ENCODE measurements at regions of chr9 and their contacts with region 1.

Region 1: GRCh38 chr9:131334629-131335367 is 45.3 kb downstream of the PLPP7 start:
- DNase-seq: peak; percentile 20
- H3K4me3 ChIP-seq: no peak overlapping the region
- H3K27ac ChIP-seq: no peak overlapping the region
- H3K4me1 ChIP-seq: no peaks in the 10 kb centered on the region
- H3K27me3 ChIP-seq: no peaks in the 10 kb centered on the region
- CTCF ChIP-seq: no peak

Region 2: GRCh38 chr9:131178382-131178781 is 156.4 kb before region 1 on chr9:
- intact Hi-C with region 1: loop called (anchors 1 kb)
- DNase-seq: peak; percentile 65
- H3K4me3 ChIP-seq: no peak overlapping the region
- H3K27ac ChIP-seq: no peak overlapping the region
- H3K4me1 ChIP-seq: no peaks in the 10 kb centered on the region
- H3K27me3 ChIP-seq: no peaks in the 10 kb centered on the region
- CTCF ChIP-seq: peak; percentile 94

Measured in colonic mucosa (tissue), 4 donors.